Panc1 (cell line): ENCODE measurements at regions of chr6 and their contacts with region 1.

Region 1: GRCh38 chr6:79777713-79778579 is 146.8 kb downstream of the SH3BGRL2 start:
- DNase-seq: peak; percentile 20
- ATAC-seq: peak; percentile 94
- H3K4me3 ChIP-seq: peak overlapping the region; percentile 32 to 58
- H3K27ac ChIP-seq: peak overlapping the region; percentile 76
- H3K4me1 ChIP-seq: peaks cover 5% of the 10 kb centered on the region
- H3K27me3 ChIP-seq: no peaks in the 10 kb centered on the region
- CTCF ChIP-seq: peak; percentile 98

Region 2: DNA sequence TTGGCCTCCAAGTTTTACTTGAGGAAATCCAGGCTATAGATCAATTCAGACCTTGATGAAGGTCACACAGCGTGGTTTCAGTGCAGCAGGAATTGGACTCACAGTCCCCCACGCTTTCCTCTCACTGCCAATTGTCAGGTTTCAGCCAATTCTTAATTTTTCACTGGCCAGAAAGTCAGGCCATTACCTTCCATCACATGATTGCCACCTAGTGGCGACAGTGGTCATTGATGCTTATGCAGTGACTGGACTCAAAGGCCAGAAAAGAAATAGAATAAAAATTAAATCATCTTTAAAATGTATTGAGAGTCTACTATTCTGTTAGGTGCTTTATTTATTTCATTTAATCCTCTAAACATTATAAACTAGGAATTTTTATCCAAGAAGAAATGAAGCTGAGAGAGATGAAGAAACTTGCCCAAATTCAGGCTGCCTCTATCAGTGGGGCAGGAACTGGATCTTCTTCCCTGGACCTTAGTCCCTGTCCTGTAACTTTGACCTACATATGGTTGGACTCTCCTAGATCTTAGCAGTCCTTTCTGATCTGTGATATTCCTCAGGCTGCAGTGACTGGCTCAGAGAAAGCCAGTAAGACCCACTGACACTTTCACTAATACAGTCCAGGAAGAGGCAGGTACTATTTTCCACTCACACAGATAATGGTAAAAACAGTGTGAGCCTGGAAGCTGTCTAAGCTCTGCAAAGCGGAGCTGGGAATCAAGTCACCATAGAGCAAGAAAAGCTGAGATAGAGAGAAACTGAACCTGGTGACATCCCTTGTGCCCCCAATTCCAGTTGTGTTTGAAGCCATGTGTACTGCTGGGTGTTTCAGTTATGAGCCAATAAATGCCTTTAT is 36.1 kb after region 1 on chr6:
- CTCF ChIA-PET with region 1: interaction called, 3 read pairs
- POLR2A ChIA-PET with region 1: interaction called, 4 read pairs
- in situ Hi-C with region 1: no loop called
- intact Hi-C with region 1: loop called (anchors 5 kb)
- DNase-seq: peak; percentile 52
- ATAC-seq: peak; percentile 94
- H3K4me3 ChIP-seq: no peak overlapping the region
- H3K27ac ChIP-seq: no peak overlapping the region; the same call in 1 of the 2 replicates
- H3K4me1 ChIP-seq: 0 out of 2 replicates have a peak, but pooled peaks cover 5% of the 10 kb centered on the region
- H3K27me3 ChIP-seq: no peaks in the 10 kb centered on the region
- CTCF ChIP-seq: peak; percentile 90

Region 3: DNA sequence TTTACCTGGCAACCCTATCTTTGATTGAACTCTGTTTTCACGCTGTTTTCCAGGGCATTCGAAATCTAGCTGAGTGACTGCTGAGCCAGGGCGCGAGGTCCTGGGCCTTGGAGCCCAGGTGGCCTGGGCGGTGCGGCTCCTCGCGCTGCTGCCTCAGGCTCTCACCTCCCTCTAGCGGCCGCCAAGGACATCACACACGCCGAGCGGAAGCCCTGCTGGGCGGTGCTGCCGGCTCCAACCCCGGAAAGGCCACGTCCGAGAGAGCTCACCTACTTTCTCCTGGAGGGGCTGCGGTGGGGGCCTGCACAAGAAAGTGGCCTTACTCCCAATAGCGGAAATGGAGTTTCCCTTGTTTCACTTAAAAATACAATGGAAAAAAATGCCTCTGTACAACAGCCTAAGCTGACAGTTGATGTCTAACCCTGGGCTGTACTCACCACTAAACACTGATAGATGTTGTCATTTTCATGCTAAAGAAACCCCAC is 91.7 kb after region 1 on chr6:
- CTCF ChIA-PET with region 1: interaction called, 8 read pairs
- POLR2A ChIA-PET with region 1: no interaction called
- in situ Hi-C with region 1: no loop called
- intact Hi-C with region 1: loop called (anchors 1 kb)
- DNase-seq: no peak
- ATAC-seq: peak; percentile 100
- H3K4me3 ChIP-seq: peak overlapping the region; percentile 8 to 43; a peak in 3 of 4 replicates
- H3K27ac ChIP-seq: peak overlapping the region; percentile 40
- H3K4me1 ChIP-seq: peaks cover 6% of the 10 kb centered on the region
- H3K27me3 ChIP-seq: peaks cover 1% of the 10 kb centered on the region
- CTCF ChIP-seq: peak; percentile 98

Region 4: GRCh38 chr6:80029470-80029869 is 251.5 kb after region 1 on chr6:
- CTCF ChIA-PET with region 1: no interaction called
- POLR2A ChIA-PET with region 1: no interaction called
- in situ Hi-C with region 1: no loop called
- intact Hi-C with region 1: no loop called
- DNase-seq: no peak
- ATAC-seq: no peak
- H3K4me3 ChIP-seq: no peak overlapping the region
- H3K27ac ChIP-seq: no peak overlapping the region
- H3K4me1 ChIP-seq: no peaks in the 10 kb centered on the region
- H3K27me3 ChIP-seq: no peaks in the 10 kb centered on the region
- CTCF ChIP-seq: no peak